SK-N-SH (cell line): ENCODE measurements at regions of chr21 and their contacts with region 1.

Region 1: DNA sequence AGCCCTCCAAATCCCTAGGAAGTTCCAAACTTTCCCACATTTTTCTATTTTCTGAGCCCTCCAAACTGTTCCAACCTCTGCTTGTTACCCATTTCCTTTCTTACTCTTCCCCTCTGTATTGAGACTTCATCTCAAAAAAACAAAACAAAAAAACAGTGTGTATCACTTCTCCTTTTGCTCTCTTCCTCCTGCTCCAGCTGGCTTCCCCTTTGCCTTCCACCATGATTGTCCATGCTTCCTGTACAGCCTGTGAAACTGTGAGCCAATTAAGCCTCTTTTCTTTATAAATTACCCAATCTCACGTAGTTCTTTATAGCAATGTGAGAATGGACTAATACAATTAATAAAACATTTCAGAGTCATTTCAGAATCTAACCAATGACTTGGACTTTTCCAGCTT is 69.6 kb upstream of the KRTAP19-8 start:
- DNase-seq: no peak
- H3K4me3 ChIP-seq: no peak overlapping the region
- H3K27ac ChIP-seq: no peak overlapping the region
- H3K4me1 ChIP-seq: peaks cover 0 to 2% of the 10 kb centered on the region in 2 experiments; a peak in 1 of 4 replicates
- H3K27me3 ChIP-seq: no peaks in the 10 kb centered on the region
- CTCF ChIP-seq: no peak
- EP300 ChIP-seq: no peak
- RAD21 ChIP-seq: no peak

Region 2: GRCh38 chr21:30847627-30848500 is 260.0 kb before region 1 on chr21:
- CTCF ChIA-PET with region 1: no interaction called
- POLR2A ChIA-PET with region 1: no interaction called
- DNase-seq: no peak
- H3K4me3 ChIP-seq: no peak overlapping the region
- H3K27ac ChIP-seq: no peak overlapping the region
- H3K4me1 ChIP-seq: no peaks in the 10 kb centered on the region
- H3K27me3 ChIP-seq: no peaks in the 10 kb centered on the region
- CTCF ChIP-seq: no peak
- EP300 ChIP-seq: no peak
- RAD21 ChIP-seq: no peak

Region 3: GRCh38 chr21:31088315-31088714 is 19.6 kb before region 1 on chr21:
- CTCF ChIA-PET with region 1: no interaction called
- POLR2A ChIA-PET with region 1: no interaction called
- DNase-seq: no peak
- H3K4me3 ChIP-seq: no peak overlapping the region
- H3K27ac ChIP-seq: no peak overlapping the region
- H3K4me1 ChIP-seq: no peaks in the 10 kb centered on the region; a peak in 1 of 4 replicates
- H3K27me3 ChIP-seq: no peaks in the 10 kb centered on the region; the same call in 1 of the 2 replicates
- CTCF ChIP-seq: no peak
- EP300 ChIP-seq: no peak
- RAD21 ChIP-seq: no peak

Region 4: GRCh38 chr21:31142600-31142999 is 34.7 kb after region 1 on chr21:
- CTCF ChIA-PET with region 1: interaction called, 10 read pairs
- POLR2A ChIA-PET with region 1: no interaction called
- DNase-seq: peak; percentile 40
- H3K4me3 ChIP-seq: no peak overlapping the region
- H3K27ac ChIP-seq: peak overlapping the region in 1 of 2 experiments; percentile 12; a peak in 1 of 4 replicates
- H3K4me1 ChIP-seq: peaks cover 0 to 29% of the 10 kb centered on the region in 2 experiments; a peak in 2 of 4 replicates
- H3K27me3 ChIP-seq: no peaks in the 10 kb centered on the region
- CTCF ChIP-seq: no peak; the same call in 1 of the 2 replicates
- EP300 ChIP-seq: no peak
- RAD21 ChIP-seq: peak; percentile 44

Region 5: GRCh38 chr21:31161157-31161556 is 53.3 kb after region 1 on chr21:
- CTCF ChIA-PET with region 1: interaction called, 18 read pairs
- POLR2A ChIA-PET with region 1: interaction called, 4 read pairs
- DNase-seq: peak; percentile 44
- H3K4me3 ChIP-seq: peak overlapping the region; percentile 52 to 61
- H3K27ac ChIP-seq: peak overlapping the region in 1 of 2 experiments; percentile 95; a peak in 2 of 4 replicates
- H3K4me1 ChIP-seq: peaks cover 0 to 27% of the 10 kb centered on the region in 2 experiments; a peak in 2 of 4 replicates
- H3K27me3 ChIP-seq: no peaks in the 10 kb centered on the region
- CTCF ChIP-seq: no peak
- EP300 ChIP-seq: 0 out of 4 replicates have a peak, but pooled peaks of 1 of the 2 experiments have one; percentile 22
- RAD21 ChIP-seq: no peak

Region 6: DNA sequence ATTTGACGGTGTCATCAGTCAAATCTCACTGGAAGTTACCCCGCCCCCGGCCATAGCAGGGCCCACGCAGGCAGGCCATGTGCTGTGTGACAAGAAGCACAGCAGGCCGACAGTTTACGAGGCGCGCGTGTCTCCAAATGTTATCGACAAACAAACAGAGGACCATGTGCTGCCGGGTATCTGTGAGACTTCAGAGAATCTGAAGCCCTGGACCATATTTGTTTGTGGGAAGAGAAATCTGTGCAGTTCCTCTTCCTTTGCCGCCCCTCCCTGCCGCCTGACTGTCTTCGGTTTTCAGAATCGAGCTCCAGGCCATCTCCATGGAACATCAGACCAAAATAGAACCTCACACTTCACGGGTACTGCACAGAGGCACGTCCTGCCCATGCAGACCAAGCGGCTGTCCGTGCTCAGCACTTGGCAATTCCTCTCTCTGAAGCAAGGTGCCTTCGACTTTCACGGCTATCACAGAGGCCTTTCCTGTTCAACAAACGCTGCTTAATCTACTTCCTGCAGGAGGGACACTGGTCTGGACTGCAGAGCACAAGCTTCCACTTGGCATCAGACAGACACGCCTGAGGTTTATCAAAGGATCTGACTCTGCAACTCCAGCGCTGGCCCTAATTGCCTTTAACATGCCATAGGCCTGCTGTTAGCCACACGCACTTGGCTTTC is 66.1 kb after region 1 on chr21:
- CTCF ChIA-PET with region 1: interaction called, 139 read pairs
- POLR2A ChIA-PET with region 1: interaction called, 5 read pairs
- DNase-seq: peak; percentile 76
- H3K4me3 ChIP-seq: no peak overlapping the region; a peak in 1 of 4 replicates
- H3K27ac ChIP-seq: peak overlapping the region; percentile 10 to 99; a peak in 2 of 4 replicates
- H3K4me1 ChIP-seq: peaks cover 0 to 56% of the 10 kb centered on the region in 2 experiments; a peak in 2 of 4 replicates
- H3K27me3 ChIP-seq: no peaks in the 10 kb centered on the region
- CTCF ChIP-seq: no peak
- EP300 ChIP-seq: peak in 1 of 2 experiments; percentile 94; a peak in 2 of 4 replicates
- RAD21 ChIP-seq: peak; percentile 10; the same call in 1 of the 2 replicates

Region 7: DNA sequence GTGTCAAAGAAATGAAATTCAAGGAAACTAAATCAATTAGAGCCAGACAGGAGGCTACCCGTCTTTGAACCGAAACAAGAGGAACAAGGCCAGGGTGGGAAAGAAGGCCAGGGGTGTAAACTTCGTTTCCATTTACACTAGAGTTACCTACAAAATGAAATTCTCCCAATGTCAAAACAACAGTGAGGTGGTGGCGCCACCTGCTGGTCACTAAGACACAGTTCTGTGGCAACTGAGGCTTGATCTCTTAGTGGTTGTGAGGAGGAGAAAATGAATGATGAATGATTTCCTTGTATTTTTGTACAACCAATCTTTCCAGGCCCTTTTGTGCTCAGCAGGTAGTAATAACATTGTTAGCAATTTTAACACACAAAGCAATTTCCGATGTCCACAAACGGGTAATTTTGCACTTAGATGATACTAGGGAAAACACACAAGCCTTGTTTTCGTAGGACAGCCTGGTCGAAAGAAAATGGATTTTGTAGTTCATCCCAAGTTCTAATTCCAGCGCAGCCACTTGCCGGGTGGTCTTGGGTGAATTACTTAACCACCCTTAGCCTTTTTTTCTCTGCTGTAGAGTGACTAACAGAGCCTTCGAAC is 496.8 kb after region 1 on chr21:
- CTCF ChIA-PET with region 1: interaction called, 21 read pairs
- POLR2A ChIA-PET with region 1: no interaction called
- DNase-seq: peak; percentile 70
- H3K4me3 ChIP-seq: peak overlapping the region in 1 of 2 experiments; percentile 30; a peak in 1 of 4 replicates
- H3K27ac ChIP-seq: no peak overlapping the region
- H3K4me1 ChIP-seq: no peaks in the 10 kb centered on the region
- H3K27me3 ChIP-seq: no peaks in the 10 kb centered on the region; the same call in 1 of the 2 replicates
- CTCF ChIP-seq: peak; percentile 91
- EP300 ChIP-seq: no peak
- RAD21 ChIP-seq: peak; percentile 94